ENCODE measurements at regions of chr2 and their contacts with region 1.

Region 1: GRCh38 chr2:84495539-84496146 is 20.7 kb upstream of the DNAH6 start:
- DNase-seq: peak; percentile 29
- ATAC-seq: peak; percentile 88
- H3K4me3 Mint-ChIP-seq: no peak overlapping the region
- H3K27ac Mint-ChIP-seq: no peak overlapping the region
- H3K4me1 Mint-ChIP-seq: peaks cover 20% of the 10 kb centered on the region
- H3K27me3 Mint-ChIP-seq: no peaks in the 10 kb centered on the region

Region 2: DNA sequence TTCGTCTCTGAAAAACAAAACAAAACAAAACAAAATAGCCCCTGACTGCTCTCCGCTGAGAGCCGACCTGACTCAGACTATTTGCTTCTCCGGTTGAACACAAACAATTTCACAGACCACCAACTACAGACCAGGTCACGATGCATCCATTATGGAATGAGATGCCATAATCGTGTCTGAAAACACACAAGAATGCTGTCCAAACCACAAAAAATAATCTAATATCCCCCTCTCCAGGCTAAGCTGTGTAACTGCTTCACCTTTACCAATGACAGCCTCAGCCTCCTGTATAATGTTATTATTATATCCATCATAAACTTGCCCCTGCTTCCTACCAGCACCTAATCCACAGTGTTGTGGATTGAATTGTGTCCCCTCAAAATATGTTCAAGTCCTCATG is 135.4 kb after region 1 on chr2:
- CTCF ChIA-PET with region 1: interaction called, 3 read pairs
- POLR2A ChIA-PET with region 1: no interaction called
- intact Hi-C with region 1: loop called (anchors 1 kb)
- DNase-seq: no peak
- ATAC-seq: peak; percentile 74
- H3K4me3 Mint-ChIP-seq: no peak overlapping the region
- H3K27ac Mint-ChIP-seq: no peak overlapping the region
- H3K4me1 Mint-ChIP-seq: peaks cover 16% of the 10 kb centered on the region
- H3K27me3 Mint-ChIP-seq: no peaks in the 10 kb centered on the region

Region 3: GRCh38 chr2:84865181-84865783 is 369.6 kb after region 1 on chr2:
- CTCF ChIA-PET with region 1: no interaction called
- POLR2A ChIA-PET with region 1: no interaction called
- intact Hi-C with region 1: loop called (anchors 1 kb)
- DNase-seq: no peak
- ATAC-seq: peak; percentile 46
- H3K4me3 Mint-ChIP-seq: no peak overlapping the region
- H3K27ac Mint-ChIP-seq: peak overlapping the region; percentile 70
- H3K4me1 Mint-ChIP-seq: peaks cover 82% of the 10 kb centered on the region
- H3K27me3 Mint-ChIP-seq: no peaks in the 10 kb centered on the region

Region 4: GRCh38 chr2:84939426-84940087 is 443.9 kb after region 1 on chr2:
- CTCF ChIA-PET with region 1: no interaction called
- POLR2A ChIA-PET with region 1: no interaction called
- intact Hi-C with region 1: no loop called
- DNase-seq: peak; percentile 83
- ATAC-seq: peak; percentile 76
- H3K4me3 Mint-ChIP-seq: peak overlapping the region; percentile 67
- H3K27ac Mint-ChIP-seq: peak overlapping the region; percentile 98
- H3K4me1 Mint-ChIP-seq: peaks cover 70% of the 10 kb centered on the region
- H3K27me3 Mint-ChIP-seq: no peaks in the 10 kb centered on the region

Region 5: GRCh38 chr2:85011747-85012146 is 516.1 kb after region 1 on chr2:
- CTCF ChIA-PET with region 1: no interaction called
- POLR2A ChIA-PET with region 1: no interaction called
- intact Hi-C with region 1: loop called (anchors 5 kb)
- DNase-seq: no peak
- ATAC-seq: no peak
- H3K4me3 Mint-ChIP-seq: no peak overlapping the region
- H3K27ac Mint-ChIP-seq: peak overlapping the region; percentile 80
- H3K4me1 Mint-ChIP-seq: peaks cover 90% of the 10 kb centered on the region
- H3K27me3 Mint-ChIP-seq: no peaks in the 10 kb centered on the region